ENCODE measurements at regions of chr1 and their contacts with region 1.

Region 1: GRCh38 chr1:147890177-147890790 is 12.3 kb upstream of the GJA8 start:
- DNase-seq: peak; percentile 60 to 62
- ATAC-seq: peak; percentile 93 to 97
- H3K4me3 ChIP-seq: no peak overlapping the region
- H3K27ac ChIP-seq: no peak overlapping the region
- H3K4me1 ChIP-seq: no peaks in the 10 kb centered on the region
- CTCF ChIP-seq: peak; percentile 70
- EP300 ChIP-seq: no peak
- POLR2A ChIP-seq: no peak
- RAD21 ChIP-seq: peak; percentile 79 to 85

Region 2: GRCh38 chr1:147494998-147495580 is 395.2 kb before region 1 on chr1:
- CTCF ChIA-PET with region 1: interaction called, 36 read pairs
- POLR2A ChIA-PET with region 1: no interaction called
- DNase-seq: peak; percentile 68 to 77
- ATAC-seq: peak; percentile 95 to 99
- H3K4me3 ChIP-seq: no peak overlapping the region
- H3K27ac ChIP-seq: no peak overlapping the region
- H3K4me1 ChIP-seq: no peaks in the 10 kb centered on the region
- CTCF ChIP-seq: peak; percentile 93
- EP300 ChIP-seq: no peak
- POLR2A ChIP-seq: no peak
- RAD21 ChIP-seq: peak; percentile 96 to 97

Region 3: GRCh38 chr1:147723691-147724323 is 166.5 kb before region 1 on chr1:
- CTCF ChIA-PET with region 1: interaction called, 29 read pairs
- POLR2A ChIA-PET with region 1: no interaction called
- DNase-seq: peak; percentile 13 to 45
- ATAC-seq: peak; percentile 87 to 94
- H3K4me3 ChIP-seq: no peak overlapping the region
- H3K27ac ChIP-seq: no peak overlapping the region
- H3K4me1 ChIP-seq: no peaks in the 10 kb centered on the region
- CTCF ChIP-seq: peak; percentile 36; the same call in 2 of the 3 replicates
- EP300 ChIP-seq: no peak
- POLR2A ChIP-seq: no peak
- RAD21 ChIP-seq: peak; percentile 51 to 69

Region 4: GRCh38 chr1:147757015-147758000 is 133.0 kb before region 1 on chr1:
- CTCF ChIA-PET with region 1: no interaction called
- POLR2A ChIA-PET with region 1: no interaction called
- DNase-seq: no peak
- ATAC-seq: no peak
- H3K4me3 ChIP-seq: no peak overlapping the region
- H3K27ac ChIP-seq: no peak overlapping the region
- H3K4me1 ChIP-seq: no peaks in the 10 kb centered on the region
- CTCF ChIP-seq: no peak
- EP300 ChIP-seq: no peak
- POLR2A ChIP-seq: no peak
- RAD21 ChIP-seq: no peak

Region 5: GRCh38 chr1:147878022-147878421 is 12.3 kb before region 1 on chr1:
- CTCF ChIA-PET with region 1: interaction called, 16 read pairs
- POLR2A ChIA-PET with region 1: no interaction called
- DNase-seq: no peak
- ATAC-seq: no peak
- H3K4me3 ChIP-seq: no peak overlapping the region
- H3K27ac ChIP-seq: no peak overlapping the region
- H3K4me1 ChIP-seq: no peaks in the 10 kb centered on the region
- CTCF ChIP-seq: no peak
- EP300 ChIP-seq: no peak
- POLR2A ChIP-seq: no peak
- RAD21 ChIP-seq: no peak